ENCODE measurements at regions of chr12 and their contacts with region 1.

Region 1: DNA sequence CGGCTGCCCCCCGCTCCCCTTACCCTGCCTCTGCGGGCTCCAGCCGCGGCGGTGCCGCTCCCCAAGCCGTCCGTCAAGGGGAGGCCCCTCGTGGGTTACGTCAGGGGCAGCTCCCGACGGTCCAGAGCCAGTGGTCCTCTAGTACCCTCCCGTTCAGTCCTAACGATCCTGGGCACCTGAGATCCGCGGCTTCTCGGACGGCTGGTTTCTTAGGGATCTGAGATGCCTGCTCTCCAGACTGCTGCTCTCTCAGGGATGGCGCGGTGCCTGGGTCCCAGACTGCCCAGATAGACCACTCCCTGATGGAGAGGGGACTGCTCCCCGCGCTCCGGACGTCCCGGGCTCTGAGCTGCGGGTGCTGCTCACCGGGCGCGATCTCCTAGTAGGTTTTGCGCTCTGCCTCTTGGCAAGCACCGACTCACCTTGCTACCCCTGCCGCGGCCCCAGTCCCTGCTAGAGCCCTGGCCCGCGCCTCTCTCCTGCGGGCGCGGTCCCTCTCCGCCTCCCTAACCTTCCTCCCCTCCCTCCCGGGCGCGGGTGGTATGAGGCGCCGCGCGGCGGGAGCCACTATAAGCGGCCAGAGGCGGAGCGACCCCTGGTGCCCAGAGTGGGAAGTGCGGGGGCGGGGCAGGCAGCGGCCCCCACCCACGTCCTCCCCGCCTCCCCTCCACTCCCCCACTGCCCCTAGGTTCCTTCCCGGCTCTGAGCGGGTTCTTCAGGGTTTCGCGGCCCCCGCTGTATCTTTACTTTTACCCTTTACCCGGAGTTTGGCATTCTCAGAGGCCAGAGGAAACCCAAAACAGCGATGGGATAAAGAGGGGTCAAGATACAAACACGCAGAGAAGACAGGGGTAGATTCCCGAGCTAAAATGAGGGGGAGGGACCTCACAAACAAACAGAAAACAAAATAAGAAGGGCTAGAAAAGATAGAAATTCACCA is at the start of gene C1QL4:
- DNase-seq: peak; percentile 79 to 93 (median 87)
- ATAC-seq: peak; percentile 97
- H3K4me3 ChIP-seq: peak within 1 kb of the TSS; percentile 48
- H3K4me3 Mint-ChIP-seq: peak within 1 kb of the TSS; percentile 85
- H3K27ac ChIP-seq: no peak within 1 kb of the TSS
- H3K27ac Mint-ChIP-seq: no peak within 1 kb of the TSS
- H3K4me1 ChIP-seq: peaks cover 33% of the 10 kb centered on the region
- H3K4me1 Mint-ChIP-seq: peaks cover 42% of the 10 kb centered on the region
- H3K27me3 ChIP-seq: peaks cover 60 to 70% of the 10 kb centered on the region in 2 experiments
- H3K27me3 Mint-ChIP-seq: peaks cover 88% of the 10 kb centered on the region
- CTCF ChIP-seq: peak; percentile 98
- total RNA-seq, gene C1QL4: not detected

Region 2: GRCh38 chr12:49288412-49288853 is 48.5 kb before region 1 on chr12:
- CTCF ChIA-PET with region 1: interaction called, 16 read pairs
- POLR2A ChIA-PET with region 1: no interaction called
- intact Hi-C with region 1: loop called (anchors 1 kb)
- DNase-seq: peak; percentile 50 to 86 (median 64)
- ATAC-seq: peak; percentile 76
- H3K4me3 ChIP-seq: no peak overlapping the region
- H3K4me3 Mint-ChIP-seq: no peak overlapping the region
- H3K27ac ChIP-seq: no peak overlapping the region
- H3K27ac Mint-ChIP-seq: no peak overlapping the region
- H3K4me1 ChIP-seq: no peaks in the 10 kb centered on the region
- H3K4me1 Mint-ChIP-seq: no peaks in the 10 kb centered on the region
- H3K27me3 ChIP-seq: peaks cover 2 to 23% of the 10 kb centered on the region in 2 experiments
- H3K27me3 Mint-ChIP-seq: peaks cover 44% of the 10 kb centered on the region
- CTCF ChIP-seq: peak; percentile 94

Region 3: GRCh38 chr12:49322708-49323523 is 14.0 kb before region 1 on chr12 and contains the start of gene TROAP:
- CTCF ChIA-PET with region 1: interaction called, 19 read pairs
- POLR2A ChIA-PET with region 1: interaction called, 7 read pairs
- intact Hi-C with region 1: loop called in 1 of 2 experiments (anchors 1 kb)
- DNase-seq: peak; percentile 93 to 99 (median 95)
- ATAC-seq: peak; percentile 95
- H3K4me3 ChIP-seq: peak within 1 kb of the TSS; percentile 89
- H3K4me3 Mint-ChIP-seq: peak within 1 kb of the TSS; percentile 90
- H3K27ac ChIP-seq: peak within 1 kb of the TSS in 1 of 2 donors; percentile 3
- H3K27ac Mint-ChIP-seq: peak within 1 kb of the TSS; percentile 56
- H3K4me1 ChIP-seq: peaks cover 19% of the 10 kb centered on the region
- H3K4me1 Mint-ChIP-seq: peaks cover 19% of the 10 kb centered on the region
- H3K27me3 ChIP-seq: no peaks in the 10 kb centered on the region
- H3K27me3 Mint-ChIP-seq: no peaks in the 10 kb centered on the region
- CTCF ChIP-seq: no peak
- total RNA-seq, gene TROAP: 0.30 to 0.31 TPM

Region 4: DNA sequence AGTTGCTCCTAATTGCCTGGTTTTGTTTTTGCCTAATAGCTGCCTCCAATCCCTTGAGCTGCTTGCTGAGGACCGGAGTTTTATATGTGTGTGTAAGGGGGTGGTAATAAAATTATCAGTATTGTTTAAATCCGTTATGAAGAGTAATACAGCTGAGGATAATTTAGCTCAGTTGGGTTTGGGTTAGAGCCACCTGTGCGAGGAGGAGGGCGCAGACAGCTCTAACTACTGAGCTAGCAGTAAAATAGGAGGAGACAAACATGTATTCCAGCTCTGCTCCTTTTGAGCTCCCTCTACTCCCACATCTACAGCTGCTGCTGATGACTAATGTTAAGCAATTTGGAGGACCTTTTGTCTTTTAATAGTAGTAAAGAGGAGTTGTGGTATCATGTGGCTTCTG is 91.9 kb after region 1 on chr12:
- CTCF ChIA-PET with region 1: no interaction called
- POLR2A ChIA-PET with region 1: no interaction called
- intact Hi-C with region 1: no loop called
- DNase-seq: peak in 1 of 14 experiments; percentile 3
- ATAC-seq: no peak
- H3K4me3 ChIP-seq: no peak overlapping the region
- H3K4me3 Mint-ChIP-seq: no peak overlapping the region
- H3K27ac ChIP-seq: no peak overlapping the region
- H3K27ac Mint-ChIP-seq: no peak overlapping the region
- H3K4me1 ChIP-seq: no peaks in the 10 kb centered on the region
- H3K4me1 Mint-ChIP-seq: no peaks in the 10 kb centered on the region
- H3K27me3 ChIP-seq: no peaks in the 10 kb centered on the region
- H3K27me3 Mint-ChIP-seq: no peaks in the 10 kb centered on the region
- CTCF ChIP-seq: no peak